ENCODE measurements at regions of chr19 and their contacts with region 1.

Region 1: GRCh38 chr19:35436477-35437405 is 11.3 kb upstream of the FFAR2 start:
- DNase-seq: peak in 1 of 2 experiments; percentile 73
- ATAC-seq: peak; percentile 21 to 68; a peak in 4 of 6 replicates
- H3K4me3 ChIP-seq: peak overlapping the region; percentile 11; the same call in 1 of the 3 replicates
- H3K27ac ChIP-seq: peak overlapping the region; percentile 22 to 49; a peak in 5 of 6 replicates
- H3K4me1 ChIP-seq: peaks cover 16% of the 10 kb centered on the region
- CTCF ChIP-seq: no peak
- EP300 ChIP-seq: no peak
- POLR2A ChIP-seq: no peak
- RAD21 ChIP-seq: no peak

Region 2: DNA sequence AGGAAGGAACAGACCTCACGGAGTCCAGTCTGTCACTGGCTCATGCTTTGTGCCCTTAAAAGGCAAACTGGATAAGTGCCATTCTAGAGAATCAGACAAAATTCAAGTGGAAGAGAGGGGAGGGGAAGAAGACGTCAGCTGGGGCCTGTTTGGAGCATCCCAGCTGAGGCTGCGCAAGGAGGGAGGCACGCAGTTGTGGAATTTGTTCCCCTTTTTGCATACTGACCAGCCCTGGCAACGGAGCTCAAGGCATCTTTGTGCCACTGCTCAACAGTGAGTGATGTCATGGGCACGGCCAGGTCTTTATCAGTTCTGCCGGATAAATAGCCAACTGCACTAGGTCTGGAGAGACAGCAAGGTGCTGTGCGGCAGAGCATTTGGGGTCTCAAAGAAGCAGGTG is 66.0 kb before region 1 on chr19 and contains the start of gene GPR42:
- CTCF ChIA-PET with region 1: no interaction called
- POLR2A ChIA-PET with region 1: no interaction called
- DNase-seq: no peak
- ATAC-seq: peak in 1 of 2 experiments; percentile 20; a peak in 1 of 6 replicates
- H3K4me3 ChIP-seq: no peak within 1 kb of the TSS
- H3K27ac ChIP-seq: no peak within 1 kb of the TSS
- H3K4me1 ChIP-seq: no peaks in the 10 kb centered on the region
- CTCF ChIP-seq: no peak
- EP300 ChIP-seq: no peak
- POLR2A ChIP-seq: no peak
- RAD21 ChIP-seq: no peak
- polyA plus RNA-seq, gene GPR42: not detected in 2 replicates

Region 3: GRCh38 chr19:35457173-35457572 is 20.4 kb after region 1 on chr19:
- CTCF ChIA-PET with region 1: interaction called, 12 read pairs
- POLR2A ChIA-PET with region 1: no interaction called
- DNase-seq: no peak
- ATAC-seq: no peak
- H3K4me3 ChIP-seq: no peak overlapping the region
- H3K27ac ChIP-seq: no peak overlapping the region
- H3K4me1 ChIP-seq: peaks cover 17% of the 10 kb centered on the region
- CTCF ChIP-seq: no peak
- EP300 ChIP-seq: no peak
- POLR2A ChIP-seq: no peak
- RAD21 ChIP-seq: no peak

Region 4: DNA sequence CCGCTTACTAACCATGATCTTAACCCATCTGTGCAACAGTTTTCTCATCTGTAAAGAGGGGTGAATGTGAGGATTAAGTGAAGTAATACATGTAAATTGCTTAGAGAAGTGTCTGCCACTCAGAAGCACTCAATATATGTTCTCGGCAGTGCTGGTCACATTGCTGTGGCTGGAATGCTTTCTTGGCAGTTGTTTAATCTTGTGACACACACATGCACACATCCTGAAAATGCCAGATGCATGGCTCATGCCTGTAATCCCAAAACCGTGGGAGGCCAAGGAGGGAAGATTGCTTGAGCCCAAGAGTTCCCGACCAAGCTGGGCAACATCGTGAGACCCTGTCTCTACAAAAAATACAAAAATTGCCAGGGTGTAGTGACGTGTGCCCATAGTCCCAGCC is 81.6 kb after region 1 on chr19:
- CTCF ChIA-PET with region 1: no interaction called
- POLR2A ChIA-PET with region 1: no interaction called
- DNase-seq: peak; percentile 62 to 72
- ATAC-seq: peak; percentile 68 to 69
- H3K4me3 ChIP-seq: no peak overlapping the region
- H3K27ac ChIP-seq: peak overlapping the region; percentile 46 to 47; a peak in 4 of 6 replicates
- H3K4me1 ChIP-seq: peaks cover 23% of the 10 kb centered on the region
- CTCF ChIP-seq: no peak
- EP300 ChIP-seq: no peak
- POLR2A ChIP-seq: no peak
- RAD21 ChIP-seq: no peak

Measured in A549 (cell line).